PC-9 (cell line): ENCODE measurements at regions of chr11 and their contacts with region 1.

Region 1: DNA sequence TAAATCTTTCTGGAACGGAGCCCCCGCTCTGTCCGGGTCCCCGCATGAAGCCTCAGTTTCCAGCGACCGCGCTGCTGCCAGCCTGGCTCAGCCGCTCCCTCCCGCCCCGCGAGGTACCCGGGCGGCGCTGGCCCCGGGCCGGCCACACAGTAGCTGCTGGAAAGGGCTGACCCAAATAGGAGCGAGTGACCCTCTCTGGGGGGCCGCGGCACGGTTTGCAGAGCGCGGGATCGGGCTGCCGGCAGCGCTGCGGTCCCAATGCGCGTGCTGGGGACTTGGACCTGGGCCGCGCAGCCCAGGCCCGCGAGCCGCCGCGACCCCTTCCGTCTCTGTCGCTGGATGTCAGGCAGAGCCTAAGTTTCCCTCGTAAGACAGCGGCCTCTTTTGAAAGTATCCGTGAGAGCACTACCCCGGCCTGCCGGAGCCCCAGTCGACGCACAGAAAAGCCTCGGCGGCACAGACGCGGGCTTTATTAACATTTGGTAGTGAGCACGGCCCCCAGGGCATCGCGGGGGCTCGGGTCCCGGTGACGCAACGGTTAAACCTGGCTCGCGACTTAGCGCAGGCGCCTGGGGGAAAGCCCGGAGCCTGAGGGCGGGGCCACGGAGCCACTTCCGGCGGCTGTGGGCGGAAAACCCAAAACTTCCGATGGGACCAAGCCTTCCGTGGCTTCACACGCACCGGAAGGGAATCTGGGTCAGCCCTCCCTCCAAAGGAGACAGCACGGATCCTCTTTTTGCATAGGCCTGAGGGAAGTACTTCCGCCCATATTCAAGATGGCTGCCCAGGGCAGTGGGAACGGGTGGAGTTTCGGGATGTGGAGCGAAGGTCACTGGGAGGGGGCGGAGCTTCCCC is 14.9 kb downstream of the BAD start:
- DNase-seq: peak; percentile 99
- H3K4me3 ChIP-seq: peak overlapping the region; percentile 63
- H3K27ac ChIP-seq: peak overlapping the region; percentile 89
- H3K4me1 ChIP-seq: peaks cover 25% of the 10 kb centered on the region
- H3K27me3 ChIP-seq: no peaks in the 10 kb centered on the region
- CTCF ChIP-seq: peak; percentile 35; the same call in 1 of the 2 replicates

Region 2: DNA sequence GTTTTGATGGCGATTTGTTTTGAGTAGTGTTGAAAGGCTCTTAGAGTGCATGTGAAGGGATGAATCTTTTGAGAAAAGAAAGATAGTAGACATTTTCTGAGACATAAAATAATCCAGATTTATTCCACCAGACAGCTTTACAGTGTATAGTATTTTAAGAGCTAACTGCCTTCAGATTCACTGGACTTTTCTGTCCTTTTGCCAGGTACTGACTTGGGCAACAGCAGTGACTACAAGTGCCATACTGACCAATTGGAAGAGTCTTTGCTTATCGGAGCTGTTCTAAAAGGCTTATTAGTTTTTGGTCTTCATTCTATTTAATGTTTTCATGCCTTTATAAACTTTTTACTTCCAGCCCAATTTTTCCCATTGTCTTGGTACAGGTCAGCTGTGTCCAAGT is 555.8 kb before region 1 on chr11:
- CTCF ChIA-PET with region 1: no interaction called
- POLR2A ChIA-PET with region 1: interaction called, 22 read pairs
- intact Hi-C with region 1: no loop called
- DNase-seq: no peak
- H3K4me3 ChIP-seq: no peak overlapping the region
- H3K27ac ChIP-seq: 0 out of 2 replicates have a peak overlapping the region, but pooled peaks have one; percentile 6
- H3K4me1 ChIP-seq: 0 out of 2 replicates have a peak, but pooled peaks cover 4% of the 10 kb centered on the region
- H3K27me3 ChIP-seq: no peaks in the 10 kb centered on the region
- CTCF ChIP-seq: no peak

Region 3: GRCh38 chr11:64204464-64204989 is 65.1 kb before region 1 on chr11:
- CTCF ChIA-PET with region 1: interaction called, 6 read pairs
- POLR2A ChIA-PET with region 1: interaction called, 10 read pairs
- intact Hi-C with region 1: loop called (anchors 1 kb)
- DNase-seq: peak; percentile 85 to 93
- H3K4me3 ChIP-seq: no peak overlapping the region
- H3K27ac ChIP-seq: no peak overlapping the region
- H3K4me1 ChIP-seq: 0 out of 2 replicates have a peak, but pooled peaks cover 4% of the 10 kb centered on the region
- H3K27me3 ChIP-seq: no peaks in the 10 kb centered on the region
- CTCF ChIP-seq: peak; percentile 88

Region 4: GRCh38 chr11:64240394-64241174 is 29.0 kb before region 1 on chr11 and contains the start of gene FKBP2:
- CTCF ChIA-PET with region 1: interaction called, 15 read pairs
- POLR2A ChIA-PET with region 1: interaction called, 21 read pairs
- intact Hi-C with region 1: loop called (anchors 1 kb)
- DNase-seq: peak; percentile 97 to 98
- H3K4me3 ChIP-seq: peak within 1 kb of the TSS; percentile 90
- H3K27ac ChIP-seq: peak within 1 kb of the TSS; percentile 97
- H3K4me1 ChIP-seq: peaks cover 46% of the 10 kb centered on the region
- H3K27me3 ChIP-seq: no peaks in the 10 kb centered on the region
- CTCF ChIP-seq: no peak
- total RNA-seq, gene FKBP2: 84.2 and 93.2 TPM in 2 replicates

Region 5: GRCh38 chr11:64252003-64252872 is 17.4 kb before region 1 on chr11:
- CTCF ChIA-PET with region 1: interaction called, 4 read pairs
- POLR2A ChIA-PET with region 1: interaction called, 11 read pairs
- intact Hi-C with region 1: loop called (anchors 1 kb)
- DNase-seq: peak in 1 of 2 experiments; percentile 76
- H3K4me3 ChIP-seq: peak overlapping the region; percentile 88
- H3K27ac ChIP-seq: no peak overlapping the region
- H3K4me1 ChIP-seq: peaks cover 5% of the 10 kb centered on the region; the same call in 1 of the 2 replicates
- H3K27me3 ChIP-seq: no peaks in the 10 kb centered on the region
- CTCF ChIP-seq: peak; percentile 61